T-cell (primary cell): ENCODE measurements at regions of chr12 and their contacts with region 1.

Region 1: GRCh38 chr12:6764011-6764828 is 1.9 kb upstream of the PTMS start:
- DNase-seq: peak in 29 of 35 experiments; percentile 17 to 77 (median 49)
- ATAC-seq: peak; percentile 54 to 80 (median 58)
- H3K4me3 ChIP-seq: peak overlapping the region in 1 of 2 donors; percentile 10
- H3K4me3 Mint-ChIP-seq: peak overlapping the region; percentile 13 to 76 (median 31)
- H3K27ac ChIP-seq: no peak overlapping the region
- H3K27ac Mint-ChIP-seq: peak overlapping the region in 1 of 2 donors; percentile 43
- H3K4me1 ChIP-seq: peaks cover 9 to 44% of the 10 kb centered on the region in 2 experiments
- H3K4me1 Mint-ChIP-seq: peaks cover 25 to 40% (median 35%) of the 10 kb centered on the region in 3 donors
- H3K27me3 ChIP-seq: peaks cover 0 to 49% of the 10 kb centered on the region in 2 experiments
- H3K27me3 Mint-ChIP-seq: peaks cover 33 to 37% of the 10 kb centered on the region in 2 donors

Region 2: GRCh38 chr12:6062757-6063735 is 701.2 kb before region 1 on chr12:
- CTCF ChIA-PET with region 1: no interaction called
- POLR2A ChIA-PET with region 1: no interaction called
- DNase-seq: peak in 34 of 35 experiments; percentile 25 to 74 (median 53)
- ATAC-seq: peak; percentile 83 to 91 (median 87)
- H3K4me3 ChIP-seq: no peak overlapping the region
- H3K4me3 Mint-ChIP-seq: no peak overlapping the region
- H3K27ac ChIP-seq: no peak overlapping the region
- H3K27ac Mint-ChIP-seq: peak overlapping the region in 1 of 2 donors; percentile 11
- H3K4me1 ChIP-seq: peaks cover 0 to 3% of the 10 kb centered on the region in 2 experiments
- H3K4me1 Mint-ChIP-seq: peaks cover under 1 to 8% (median 4%) of the 10 kb centered on the region in 3 donors
- H3K27me3 ChIP-seq: peaks cover 0 to 57% of the 10 kb centered on the region in 2 experiments
- H3K27me3 Mint-ChIP-seq: peaks cover 0 to 14% of the 10 kb centered on the region in 2 donors

Region 3: GRCh38 chr12:6735448-6736191 is 28.6 kb before region 1 on chr12:
- CTCF ChIA-PET with region 1: no interaction called
- POLR2A ChIA-PET with region 1: no interaction called
- DNase-seq: peak in 19 of 35 experiments; percentile 9 to 55 (median 26)
- ATAC-seq: peak in 3 of 4 experiments; percentile 49 to 61 (median 50)
- H3K4me3 ChIP-seq: no peak overlapping the region
- H3K4me3 Mint-ChIP-seq: no peak overlapping the region
- H3K27ac ChIP-seq: no peak overlapping the region
- H3K27ac Mint-ChIP-seq: no peak overlapping the region
- H3K4me1 ChIP-seq: no peaks in the 10 kb centered on the region
- H3K4me1 Mint-ChIP-seq: peaks cover 0 to 5% (median 4%) of the 10 kb centered on the region in 3 donors
- H3K27me3 ChIP-seq: no peaks in the 10 kb centered on the region
- H3K27me3 Mint-ChIP-seq: no peaks in the 10 kb centered on the region

Region 4: DNA sequence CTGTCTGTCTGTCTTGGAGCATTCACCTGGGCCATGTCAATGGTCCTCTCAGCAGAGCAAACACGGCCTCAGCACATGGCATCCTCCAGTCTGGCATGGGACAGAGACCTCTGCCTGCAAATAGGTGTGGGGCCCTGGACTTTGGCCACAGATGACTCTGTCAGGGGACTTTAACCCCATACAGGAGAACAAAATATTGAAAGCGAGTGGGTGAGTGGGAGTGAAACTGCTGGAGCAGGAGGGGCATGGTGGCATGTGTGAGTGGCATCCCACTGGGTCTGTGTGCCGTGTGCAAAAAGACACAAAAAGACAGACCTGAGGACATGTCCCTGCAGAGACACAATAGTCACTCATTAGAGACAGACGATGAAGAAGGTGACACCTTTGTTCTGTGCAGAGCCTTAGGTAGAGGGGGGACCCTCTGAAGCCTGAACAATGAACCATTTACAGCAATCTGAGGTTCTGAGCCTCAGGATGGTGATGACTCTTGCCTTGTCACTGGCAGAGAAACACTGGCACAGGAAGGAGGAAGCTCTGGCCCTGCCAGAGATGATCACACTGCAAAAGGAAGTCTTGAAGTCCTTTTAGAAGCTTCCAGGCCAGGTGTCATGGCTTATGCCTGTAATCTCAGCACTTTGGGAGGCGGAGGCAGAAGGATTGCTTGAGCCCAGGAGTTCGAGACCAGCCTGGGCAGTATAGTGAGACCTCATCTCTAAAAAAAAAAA is 15.7 kb after region 1 on chr12:
- CTCF ChIA-PET with region 1: interaction called, 6 to 7 read pairs
- POLR2A ChIA-PET with region 1: interaction called, 4 to 10 read pairs
- DNase-seq: no peak
- ATAC-seq: no peak
- H3K4me3 ChIP-seq: no peak overlapping the region
- H3K4me3 Mint-ChIP-seq: peak overlapping the region in 1 of 3 donors; percentile 98
- H3K27ac ChIP-seq: no peak overlapping the region
- H3K27ac Mint-ChIP-seq: peak overlapping the region in 1 of 2 donors; percentile 34
- H3K4me1 ChIP-seq: peaks cover 32 to 75% of the 10 kb centered on the region in 2 experiments
- H3K4me1 Mint-ChIP-seq: peaks cover 44 to 63% (median 51%) of the 10 kb centered on the region in 3 donors
- H3K27me3 ChIP-seq: peaks cover 0 to 15% of the 10 kb centered on the region in 2 experiments
- H3K27me3 Mint-ChIP-seq: peaks cover 5 to 12% of the 10 kb centered on the region in 2 donors